PC-3 (cell line): ENCODE measurements at regions of chr12 and their contacts with region 1.

Region 1: GRCh38 chr12:69196302-69197288 is 42.8 kb upstream of the CPSF6 start:
- DNase-seq: peak; percentile 47
- ATAC-seq: no peak
- H3K4me3 ChIP-seq: no peak overlapping the region
- H3K27ac ChIP-seq: no peak overlapping the region
- H3K4me1 ChIP-seq: no peaks in the 10 kb centered on the region
- H3K27me3 ChIP-seq: no peaks in the 10 kb centered on the region
- CTCF ChIP-seq: peak; percentile 54

Region 2: DNA sequence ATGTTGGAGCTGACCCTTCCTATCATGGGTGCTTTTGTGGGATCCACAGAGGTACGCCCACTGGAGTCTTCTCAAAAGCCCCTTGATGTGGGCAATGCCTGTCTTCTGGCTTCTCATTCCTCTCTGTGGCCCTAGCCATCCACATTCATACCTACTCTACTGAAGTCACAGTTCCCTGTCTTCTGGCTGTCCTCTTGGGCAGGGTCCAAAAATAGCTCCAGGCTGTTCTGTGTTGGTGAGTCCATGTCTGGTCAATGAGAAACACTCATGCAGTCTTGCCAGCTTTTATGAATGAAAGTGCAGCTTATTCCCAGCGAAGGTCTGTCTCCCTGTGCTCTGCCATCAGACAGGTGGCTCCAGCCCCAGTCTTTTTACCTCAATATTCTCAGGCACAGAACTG is 728.6 kb before region 1 on chr12:
- CTCF ChIA-PET with region 1: no interaction called
- POLR2A ChIA-PET with region 1: no interaction called
- intact Hi-C with region 1: no loop called
- DNase-seq: no peak
- ATAC-seq: no peak
- H3K4me3 ChIP-seq: no peak overlapping the region
- H3K27ac ChIP-seq: no peak overlapping the region
- H3K4me1 ChIP-seq: no peaks in the 10 kb centered on the region
- H3K27me3 ChIP-seq: no peaks in the 10 kb centered on the region
- CTCF ChIP-seq: no peak

Region 3: DNA sequence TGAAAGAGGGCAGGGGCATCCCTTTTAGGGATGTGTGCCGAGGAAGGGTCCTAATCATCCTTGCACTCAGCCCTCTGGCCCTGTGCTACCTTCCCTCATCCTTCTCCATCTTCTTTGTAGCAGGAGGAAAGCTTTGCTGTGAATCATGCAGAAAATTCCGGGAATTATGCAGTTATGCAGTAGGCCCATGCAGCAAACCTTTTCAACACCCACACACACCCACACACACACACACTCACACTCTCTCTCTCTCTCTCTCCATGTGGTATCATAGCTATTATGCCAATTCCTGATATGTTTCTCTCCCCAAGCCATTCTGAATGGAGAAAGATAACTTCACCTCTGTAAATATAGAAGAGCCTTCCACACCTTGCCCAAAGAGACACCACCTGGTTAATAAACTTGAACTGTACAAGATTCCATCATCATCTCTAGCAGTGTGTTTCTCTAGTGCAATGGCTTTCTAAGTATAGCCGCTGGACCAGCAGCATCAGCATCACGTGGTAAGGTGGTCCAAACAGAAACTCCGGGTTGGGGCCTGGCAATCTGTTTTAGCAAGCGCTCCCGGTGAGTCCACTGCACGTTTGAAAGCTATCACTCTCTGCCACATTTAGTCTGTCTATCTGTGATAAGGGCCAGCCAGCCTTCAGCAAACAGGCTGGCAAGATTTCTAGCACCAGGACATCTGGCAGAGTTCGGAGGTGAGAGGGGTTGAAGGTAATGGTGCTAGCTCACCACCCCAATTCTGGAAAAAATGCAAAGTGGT is 331.0 kb before region 1 on chr12:
- CTCF ChIA-PET with region 1: no interaction called
- POLR2A ChIA-PET with region 1: no interaction called
- intact Hi-C with region 1: loop called (anchors 2 kb)
- DNase-seq: no peak
- ATAC-seq: no peak
- H3K4me3 ChIP-seq: no peak overlapping the region
- H3K27ac ChIP-seq: no peak overlapping the region
- H3K4me1 ChIP-seq: no peaks in the 10 kb centered on the region
- H3K27me3 ChIP-seq: no peaks in the 10 kb centered on the region
- CTCF ChIP-seq: no peak